ENCODE measurements at regions of chr6 and their contacts with region 1.

Region 1: DNA sequence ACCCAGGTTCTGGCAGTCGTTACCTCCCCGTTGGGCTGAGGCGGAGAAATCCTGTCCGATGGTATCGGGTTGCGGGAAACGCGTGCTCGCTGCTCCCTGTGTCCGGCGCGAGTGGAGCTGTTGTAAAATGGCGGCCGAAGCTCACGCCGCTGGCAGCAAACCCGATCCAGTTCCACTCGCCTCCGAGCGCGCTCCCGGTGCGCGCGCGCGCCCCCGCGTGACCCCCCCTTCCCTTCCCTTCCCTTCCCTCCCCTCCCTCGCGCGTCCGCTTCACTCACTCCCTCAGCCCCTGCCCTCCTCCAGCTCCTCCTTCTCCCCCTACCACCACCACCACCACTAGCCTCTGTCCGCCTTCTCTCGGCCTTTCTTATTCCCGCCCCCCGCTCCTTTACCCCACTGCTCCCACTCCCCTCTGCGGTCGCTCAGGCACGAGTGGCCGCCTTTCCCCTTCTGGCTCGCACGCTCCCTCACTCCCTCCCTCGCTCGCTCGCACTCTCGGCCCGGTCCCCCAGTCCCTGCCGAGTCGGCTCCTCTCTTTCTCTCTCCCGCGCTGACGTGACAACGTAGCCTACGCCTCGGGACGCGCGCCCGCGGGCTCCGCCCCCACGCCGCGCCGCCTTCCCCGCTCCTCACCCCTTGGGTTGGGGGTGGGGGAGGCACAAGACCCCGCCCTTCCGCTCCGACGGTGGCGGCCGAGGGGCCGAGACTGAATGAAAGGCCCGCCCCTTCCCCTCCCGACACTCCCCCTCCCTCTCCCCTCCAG is at the start of gene SYNCRIP:
- DNase-seq: peak; percentile 99
- ATAC-seq: peak; percentile 82
- H3K4me3 Mint-ChIP-seq: peak within 1 kb of the TSS; percentile 88
- H3K27ac Mint-ChIP-seq: peak within 1 kb of the TSS; percentile 99
- H3K4me1 Mint-ChIP-seq: peaks cover 45% of the 10 kb centered on the region
- H3K27me3 Mint-ChIP-seq: no peaks in the 10 kb centered on the region
- total RNA-seq, gene SYNCRIP: 156 to 191 TPM

Region 2: GRCh38 chr6:85593438-85594196 is 49.3 kb before region 1 on chr6 and contains the start of gene SNX14:
- CTCF ChIA-PET with region 1: interaction called, 4 read pairs
- POLR2A ChIA-PET with region 1: interaction called, 17 read pairs
- intact Hi-C with region 1: loop called (anchors 1 kb)
- DNase-seq: peak; percentile 87
- ATAC-seq: peak; percentile 81
- H3K4me3 Mint-ChIP-seq: peak within 1 kb of the TSS; percentile 83
- H3K27ac Mint-ChIP-seq: peak within 1 kb of the TSS; percentile 90
- H3K4me1 Mint-ChIP-seq: peaks cover 28% of the 10 kb centered on the region
- H3K27me3 Mint-ChIP-seq: no peaks in the 10 kb centered on the region
- total RNA-seq, gene SNX14: 38.4 to 54.7 TPM

Region 3: DNA sequence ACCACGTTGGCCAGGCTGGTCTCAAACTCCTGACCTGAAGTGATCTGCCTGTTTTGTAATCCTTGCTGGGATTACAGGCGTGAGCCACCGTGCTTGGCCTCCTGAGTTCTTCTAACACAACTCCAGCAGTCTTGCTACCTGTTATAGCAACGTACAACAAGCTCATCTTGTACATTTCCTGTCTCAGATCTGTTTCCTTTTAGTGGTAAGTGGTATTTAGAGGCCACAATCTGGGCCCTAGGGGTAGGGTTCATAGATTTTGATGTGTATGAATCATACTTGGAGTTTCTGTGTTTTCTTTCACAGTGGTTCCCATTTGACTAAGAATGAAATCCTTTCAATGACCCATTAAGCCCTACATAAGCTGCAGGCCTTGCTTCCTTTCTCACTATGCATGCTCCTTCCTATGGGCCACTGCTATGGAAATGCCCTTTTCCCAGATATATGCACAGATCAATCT is 26.8 kb after region 1 on chr6:
- CTCF ChIA-PET with region 1: interaction called, 7 read pairs
- POLR2A ChIA-PET with region 1: interaction called, 265 read pairs
- intact Hi-C with region 1: loop called in 1 of 2 experiments (anchors 2 kb)
- DNase-seq: peak; percentile 62
- ATAC-seq: peak; percentile 94
- H3K4me3 Mint-ChIP-seq: peak overlapping the region; percentile 68
- H3K27ac Mint-ChIP-seq: peak overlapping the region; percentile 87
- H3K4me1 Mint-ChIP-seq: peaks cover 56% of the 10 kb centered on the region
- H3K27me3 Mint-ChIP-seq: no peaks in the 10 kb centered on the region

Region 4: GRCh38 chr6:87472525-87473418 is 1829.8 kb after region 1 on chr6 and contains the start of gene SLC35A1:
- CTCF ChIA-PET with region 1: no interaction called
- POLR2A ChIA-PET with region 1: no interaction called
- intact Hi-C with region 1: loop called in 1 of 2 experiments (anchors 2 kb)
- DNase-seq: peak; percentile 92
- ATAC-seq: peak; percentile 90
- H3K4me3 Mint-ChIP-seq: peak within 1 kb of the TSS; percentile 88
- H3K27ac Mint-ChIP-seq: peak within 1 kb of the TSS; percentile 93
- H3K4me1 Mint-ChIP-seq: peaks cover 18% of the 10 kb centered on the region
- H3K27me3 Mint-ChIP-seq: peaks cover 3% of the 10 kb centered on the region
- total RNA-seq, gene SLC35A1: 6.5 to 9.9 TPM